ENCODE measurements at regions of chr11 and their contacts with region 1.

Region 1: GRCh38 chr11:96538104-96538503 is 148.3 kb downstream of the JRKL start:
- DNase-seq: no peak

Region 2: DNA sequence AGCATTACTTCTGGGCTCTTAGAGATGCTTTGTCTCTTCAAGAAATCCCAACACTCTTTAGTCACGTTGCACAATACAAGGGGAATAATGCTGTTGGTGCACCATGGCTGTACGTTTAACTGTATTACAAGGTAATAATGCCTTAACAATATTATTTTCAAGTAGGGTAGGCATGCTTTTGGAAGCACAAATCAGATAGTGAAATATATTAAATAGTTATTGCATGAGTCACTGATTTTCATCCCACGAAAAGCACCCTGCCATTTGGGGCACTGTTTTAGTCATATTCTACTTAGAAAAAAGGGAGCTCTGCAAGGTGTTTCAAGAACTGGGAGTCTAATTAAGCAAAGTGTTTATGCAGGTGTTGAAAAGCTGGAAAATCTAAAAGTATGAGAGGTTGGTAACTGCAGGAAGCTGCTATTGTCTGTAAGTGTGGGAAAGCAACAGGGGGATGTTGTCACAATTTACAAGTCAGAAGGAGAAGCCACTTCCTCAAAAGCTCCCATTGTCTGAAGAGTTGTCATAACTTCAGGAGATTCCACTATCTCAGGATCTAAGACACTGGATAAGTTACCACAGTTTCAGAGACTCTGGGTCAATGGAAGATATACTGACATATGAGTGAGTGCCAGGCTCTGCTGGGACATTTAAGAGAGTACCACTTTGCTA is 69.9 kb after region 1 on chr11:
- intact Hi-C with region 1: loop called in 1 of 2 experiments (anchors 2 kb)
- DNase-seq: no peak